ENCODE measurements at regions of chr17 and their contacts with region 1.

Region 1: GRCh38 chr17:64781014-64781753 is 119.1 kb upstream of the SMURF2 start:
- DNase-seq: peak; percentile 50
- CTCF ChIP-seq: no peak

Region 2: GRCh38 chr17:64496786-64497564 is 284.2 kb before region 1 on chr17 and contains the start of gene POLG2:
- in situ Hi-C with region 1: no loop called
- DNase-seq: peak; percentile 93
- CTCF ChIP-seq: peak; percentile 56

Region 3: GRCh38 chr17:64638552-64639203 is 142.5 kb before region 1 on chr17:
- in situ Hi-C with region 1: no loop called
- DNase-seq: no peak
- CTCF ChIP-seq: no peak

Region 4: GRCh38 chr17:64938925-64939474 is 157.8 kb after region 1 on chr17:
- in situ Hi-C with region 1: loop called (anchors 25 kb)
- DNase-seq: peak; percentile 81
- CTCF ChIP-seq: peak; percentile 83

Measured in GM13976 (cell line).